ENCODE measurements at regions of chr1 and their contacts with region 1.

Region 1: GRCh38 chr1:28208818-28209441 is 23.9 kb downstream of the DNAJC8 start:
- DNase-seq: peak; percentile 57
- ATAC-seq: peak; percentile 99
- H3K4me3 ChIP-seq: no peak overlapping the region
- H3K27ac ChIP-seq: no peak overlapping the region
- H3K4me1 ChIP-seq: no peaks in the 10 kb centered on the region
- H3K27me3 ChIP-seq: no peaks in the 10 kb centered on the region
- CTCF ChIP-seq: peak; percentile 72 to 92 (median 78); a peak in 5 of 6 replicates
- EP300 ChIP-seq: no peak
- POLR2A ChIP-seq: no peak
- RAD21 ChIP-seq: peak; percentile 99

Region 2: GRCh38 chr1:27934818-27935549 is 273.9 kb before region 1 on chr1 and contains the start of gene SMPDL3B:
- CTCF ChIA-PET with region 1: interaction called, 9 read pairs
- POLR2A ChIA-PET with region 1: interaction called, 3 read pairs
- RAD21 ChIA-PET with region 1: no interaction called
- SMC1A ChIA-PET with region 1: interaction called, 12 read pairs
- in situ Hi-C with region 1: no loop called
- intact Hi-C with region 1: no loop called
- DNase-seq: no peak
- ATAC-seq: peak; percentile 83
- H3K4me3 ChIP-seq: peak within 1 kb of the TSS; percentile 44
- H3K27ac ChIP-seq: no peak within 1 kb of the TSS
- H3K4me1 ChIP-seq: peaks cover 7% of the 10 kb centered on the region
- H3K27me3 ChIP-seq: peaks cover 0 to 2% of the 10 kb centered on the region in 2 experiments; a peak in 2 of 4 replicates
- CTCF ChIP-seq: no peak
- EP300 ChIP-seq: no peak
- POLR2A ChIP-seq: no peak
- RAD21 ChIP-seq: no peak
- polyA plus RNA-seq, gene SMPDL3B: 0.60 to 0.69 TPM

Region 3: DNA sequence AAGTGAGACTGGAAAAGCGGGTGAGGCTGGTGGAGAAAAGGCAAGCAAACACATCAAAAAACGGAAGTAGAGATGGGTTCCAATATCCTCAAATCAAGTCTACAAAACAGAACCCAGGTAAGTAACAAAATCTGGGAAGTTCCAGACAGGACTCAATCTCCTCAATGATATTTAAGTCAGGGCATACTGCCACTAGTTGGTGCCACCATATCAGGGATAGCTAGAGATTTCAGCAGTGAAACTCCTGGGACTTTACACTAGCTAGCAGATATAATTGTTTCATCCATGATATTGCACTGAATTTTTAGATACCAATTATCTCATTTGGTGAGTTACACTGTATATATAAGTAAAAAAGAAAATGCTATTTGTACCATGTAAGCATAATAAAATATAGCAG is 172.5 kb before region 1 on chr1:
- CTCF ChIA-PET with region 1: interaction called, 19 read pairs
- POLR2A ChIA-PET with region 1: no interaction called
- RAD21 ChIA-PET with region 1: interaction called, 15 read pairs
- SMC1A ChIA-PET with region 1: interaction called, 15 read pairs
- in situ Hi-C with region 1: no loop called
- intact Hi-C with region 1: no loop called
- DNase-seq: no peak
- ATAC-seq: no peak
- H3K4me3 ChIP-seq: no peak overlapping the region
- H3K27ac ChIP-seq: no peak overlapping the region
- H3K4me1 ChIP-seq: no peaks in the 10 kb centered on the region
- H3K27me3 ChIP-seq: no peaks in the 10 kb centered on the region
- CTCF ChIP-seq: peak in 1 of 3 experiments; percentile 49; a peak in 3 of 6 replicates
- EP300 ChIP-seq: no peak
- POLR2A ChIP-seq: no peak
- RAD21 ChIP-seq: peak; percentile 24; the same call in 1 of the 2 replicates

Region 4: GRCh38 chr1:28112388-28113241 is 96.3 kb before region 1 on chr1:
- CTCF ChIA-PET with region 1: interaction called, 18 read pairs
- POLR2A ChIA-PET with region 1: interaction called, 3 read pairs
- RAD21 ChIA-PET with region 1: interaction called, 9 read pairs
- SMC1A ChIA-PET with region 1: interaction called, 13 read pairs
- in situ Hi-C with region 1: no loop called
- intact Hi-C with region 1: no loop called
- DNase-seq: no peak
- ATAC-seq: peak; percentile 43; the same call in 1 of the 3 replicates
- H3K4me3 ChIP-seq: no peak overlapping the region
- H3K27ac ChIP-seq: no peak overlapping the region
- H3K4me1 ChIP-seq: peaks cover 39% of the 10 kb centered on the region
- H3K27me3 ChIP-seq: no peaks in the 10 kb centered on the region
- CTCF ChIP-seq: peak in 1 of 3 experiments; percentile 48; a peak in 1 of 6 replicates
- EP300 ChIP-seq: no peak
- POLR2A ChIP-seq: no peak
- RAD21 ChIP-seq: peak; percentile 60

Region 5: DNA sequence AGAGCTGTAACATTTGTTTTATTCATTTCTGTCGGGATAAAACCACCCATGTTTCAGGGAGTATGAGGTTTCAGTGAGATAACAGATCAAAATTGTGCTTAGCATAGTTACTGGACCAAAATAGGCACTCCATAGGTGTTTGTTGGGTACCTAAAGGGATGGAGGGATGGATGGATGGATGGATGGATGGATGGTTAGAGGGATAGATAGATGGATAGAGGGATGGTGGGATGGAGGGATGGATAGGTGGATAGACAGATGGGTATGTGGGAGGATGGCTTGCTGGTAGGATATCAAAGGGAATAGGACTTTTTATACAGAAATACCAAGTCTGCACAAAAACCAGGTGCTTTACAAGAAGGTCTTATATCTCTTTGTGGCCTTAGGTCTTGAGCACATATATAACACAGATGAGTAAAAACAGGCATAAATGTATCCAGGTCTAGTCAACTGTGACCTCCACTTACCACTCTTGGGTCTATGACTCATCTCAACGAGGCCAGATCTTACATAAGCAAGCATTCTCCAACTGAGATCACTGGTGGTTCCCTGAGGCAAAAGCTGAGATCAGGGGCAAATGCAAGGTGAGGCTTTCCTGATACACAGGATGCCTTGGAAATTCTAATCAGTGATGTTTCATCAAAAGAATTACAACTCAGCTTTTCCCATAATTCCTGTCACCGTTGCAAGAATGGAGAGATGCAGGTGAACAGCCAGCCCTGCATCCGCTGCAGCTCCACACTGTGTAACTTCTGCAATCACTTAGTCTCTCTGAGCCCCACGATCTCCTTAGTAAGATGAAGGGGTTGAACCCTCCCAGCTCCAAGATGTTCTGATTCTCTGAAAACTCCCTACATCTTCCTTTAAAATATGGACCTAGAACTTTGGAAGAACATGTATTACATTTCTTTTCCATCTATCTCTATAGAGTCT is 64.5 kb before region 1 on chr1:
- CTCF ChIA-PET with region 1: interaction called, 5 read pairs
- POLR2A ChIA-PET with region 1: no interaction called
- RAD21 ChIA-PET with region 1: interaction called, 8 read pairs
- SMC1A ChIA-PET with region 1: interaction called, 15 read pairs
- in situ Hi-C with region 1: no loop called
- intact Hi-C with region 1: no loop called
- DNase-seq: peak; percentile 97
- ATAC-seq: peak; percentile 91
- H3K4me3 ChIP-seq: peak overlapping the region; percentile 17
- H3K27ac ChIP-seq: peak overlapping the region; percentile 62
- H3K4me1 ChIP-seq: peaks cover 51% of the 10 kb centered on the region
- H3K27me3 ChIP-seq: no peaks in the 10 kb centered on the region
- CTCF ChIP-seq: no peak
- EP300 ChIP-seq: peak; percentile 54 to 94; a peak in 3 of 4 replicates
- POLR2A ChIP-seq: no peak
- RAD21 ChIP-seq: no peak

Region 6: GRCh38 chr1:28172713-28173150 is 36.2 kb before region 1 on chr1:
- CTCF ChIA-PET with region 1: interaction called, 36 read pairs
- POLR2A ChIA-PET with region 1: interaction called, 4 read pairs
- RAD21 ChIA-PET with region 1: interaction called, 68 read pairs
- SMC1A ChIA-PET with region 1: interaction called, 74 read pairs
- in situ Hi-C with region 1: no loop called
- intact Hi-C with region 1: loop called (anchors 2 kb)
- DNase-seq: peak; percentile 98
- ATAC-seq: peak; percentile 59
- H3K4me3 ChIP-seq: 0 out of 2 replicates have a peak overlapping the region, but pooled peaks have one; percentile 30
- H3K27ac ChIP-seq: peak overlapping the region; percentile 69
- H3K4me1 ChIP-seq: peaks cover 82% of the 10 kb centered on the region
- H3K27me3 ChIP-seq: no peaks in the 10 kb centered on the region
- CTCF ChIP-seq: no peak
- EP300 ChIP-seq: peak; percentile 92 to 98
- POLR2A ChIP-seq: 0 out of 2 replicates have a peak, but pooled peaks have one; percentile 21
- RAD21 ChIP-seq: 0 out of 2 replicates have a peak, but pooled peaks have one; percentile 3

Region 7: GRCh38 chr1:28301471-28302174 is 92.7 kb after region 1 on chr1:
- CTCF ChIA-PET with region 1: no interaction called
- POLR2A ChIA-PET with region 1: no interaction called
- RAD21 ChIA-PET with region 1: no interaction called
- SMC1A ChIA-PET with region 1: no interaction called
- in situ Hi-C with region 1: no loop called
- intact Hi-C with region 1: no loop called
- DNase-seq: no peak
- ATAC-seq: no peak
- H3K4me3 ChIP-seq: no peak overlapping the region
- H3K27ac ChIP-seq: no peak overlapping the region
- H3K4me1 ChIP-seq: no peaks in the 10 kb centered on the region
- H3K27me3 ChIP-seq: no peaks in the 10 kb centered on the region
- CTCF ChIP-seq: no peak
- EP300 ChIP-seq: no peak
- POLR2A ChIP-seq: no peak
- RAD21 ChIP-seq: no peak